ENCODE measurements at regions of chr6 and their contacts with region 1.

Region 1: DNA sequence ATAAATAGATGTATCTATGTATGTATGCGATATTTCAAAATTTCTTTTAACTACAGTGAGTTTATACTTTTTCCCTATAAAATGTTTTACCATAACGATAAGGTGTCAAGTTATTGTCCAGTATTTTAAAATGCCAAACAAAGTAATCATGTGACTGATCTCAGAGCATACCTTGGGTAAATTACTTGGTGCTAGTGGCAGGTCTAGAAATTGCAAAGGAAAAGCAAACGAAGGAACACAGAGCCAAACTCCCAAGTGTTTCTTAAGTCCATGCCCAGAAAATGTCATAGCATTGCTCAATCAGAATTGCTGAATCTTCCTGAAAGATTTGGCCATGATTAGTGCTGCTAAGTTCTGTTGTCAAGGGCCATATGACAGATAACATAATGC is 77.5 kb downstream of the CAP2 start:
- DNase-seq: no peak
- H3K4me3 ChIP-seq: no peak overlapping the region
- H3K27ac ChIP-seq: no peak overlapping the region
- H3K4me1 ChIP-seq: no peaks in the 10 kb centered on the region
- H3K27me3 ChIP-seq: no peaks in the 10 kb centered on the region
- CTCF ChIP-seq: no peak
- EP300 ChIP-seq: no peak
- POLR2A ChIP-seq: no peak

Region 2: DNA sequence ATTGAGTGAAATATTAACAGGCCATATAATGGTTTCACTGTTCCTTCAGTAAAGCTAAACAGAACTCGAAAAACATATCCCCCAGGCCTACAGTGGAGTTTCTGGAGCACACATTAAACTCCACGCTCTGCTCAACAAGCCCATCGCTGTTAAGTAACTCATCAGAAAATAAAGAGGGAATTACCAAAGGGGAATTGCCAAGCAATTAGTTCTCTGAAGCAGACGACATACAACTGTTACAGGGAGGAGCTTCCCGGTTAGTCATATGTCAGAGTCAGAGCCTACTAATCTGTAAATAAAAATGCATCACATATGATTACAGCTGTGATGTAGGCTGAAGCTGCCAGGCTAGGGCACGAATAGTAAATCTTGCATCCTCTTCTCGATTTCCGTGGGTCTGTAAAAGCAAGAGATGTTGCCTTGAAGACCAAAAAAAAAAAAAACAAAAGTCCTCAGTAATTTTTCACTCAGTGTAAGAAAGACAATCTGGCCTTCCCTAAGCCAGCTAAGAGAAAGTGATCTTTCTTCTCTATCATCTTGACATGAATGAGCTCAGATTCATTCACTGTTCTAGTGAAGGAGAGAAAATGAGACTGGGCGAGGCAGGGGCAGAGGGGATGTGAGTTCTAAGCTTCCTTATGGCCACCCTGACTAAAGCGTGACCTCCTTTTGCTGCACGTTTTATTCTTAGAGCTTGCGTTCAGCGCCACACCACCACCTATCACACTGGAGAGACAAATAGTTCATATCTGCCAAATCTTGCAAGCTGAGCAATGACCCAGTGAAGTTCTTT is 723.5 kb before region 1 on chr6:
- intact Hi-C with region 1: loop called in 1 of 4 experiments (anchors 5 kb)
- DNase-seq: no peak
- H3K4me3 ChIP-seq: no peak overlapping the region
- H3K27ac ChIP-seq: no peak overlapping the region
- H3K4me1 ChIP-seq: peaks cover 3% of the 10 kb centered on the region
- H3K27me3 ChIP-seq: no peaks in the 10 kb centered on the region
- CTCF ChIP-seq: no peak
- EP300 ChIP-seq: no peak
- POLR2A ChIP-seq: no peak

Measured in ovary (tissue), 10 donors.